Lower leg skin (tissue), 4 donors: ENCODE measurements at regions of chr16 and their contacts with region 1.

Region 1: GRCh38 chr16:3295783-3296182 is 9.4 kb downstream of the TIGD7 start:
- DNase-seq: no peak
- H3K4me3 ChIP-seq: no peak overlapping the region
- CTCF ChIP-seq: no peak
- POLR2A ChIP-seq: no peak

Region 2: DNA sequence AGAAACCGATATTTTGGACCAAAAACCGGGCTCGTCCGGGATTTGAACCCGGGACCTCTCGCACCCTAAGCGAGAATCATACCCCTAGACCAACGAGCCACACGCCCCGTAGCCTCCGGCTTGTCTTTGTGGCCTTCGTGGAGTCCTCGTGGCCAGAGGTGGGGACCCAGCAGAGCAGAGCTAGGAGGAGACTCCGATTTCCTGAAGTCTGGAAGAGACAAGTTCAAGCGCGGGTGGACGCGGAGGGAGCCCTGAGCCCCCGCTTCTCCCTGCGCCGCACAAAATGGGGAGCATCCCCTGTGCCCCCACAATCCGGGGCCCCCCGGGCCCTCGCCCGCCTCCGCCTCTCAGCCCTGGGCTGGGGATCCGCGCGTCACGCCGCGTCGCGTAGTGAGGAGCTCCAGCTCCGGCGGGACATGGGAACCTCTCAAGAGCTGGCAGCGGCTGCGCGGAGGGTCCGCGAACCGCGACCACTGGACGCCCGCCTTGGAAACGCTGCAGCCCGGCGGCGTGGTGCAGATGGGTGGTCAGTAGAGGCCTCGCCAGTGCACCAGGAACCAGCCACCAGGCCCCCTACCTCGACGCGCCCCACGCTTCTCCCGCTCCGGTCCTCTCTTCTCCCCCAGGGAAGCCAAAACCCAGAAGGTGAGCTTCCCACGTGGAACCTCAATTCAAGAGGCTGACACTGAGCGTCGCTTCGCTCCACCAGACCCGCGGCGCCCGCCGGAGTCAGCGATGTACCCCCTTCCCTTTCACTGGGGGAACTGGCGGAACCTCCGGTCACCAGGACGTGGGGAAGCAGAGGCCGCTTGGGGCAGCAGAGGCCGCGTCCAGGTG is 113.0 kb before region 1 on chr16:
- intact Hi-C with region 1: loop called (anchors 5 kb)
- DNase-seq: no peak
- H3K4me3 ChIP-seq: peak overlapping the region; percentile 13
- CTCF ChIP-seq: no peak
- POLR2A ChIP-seq: no peak